ENCODE measurements at regions of chr1 and their contacts with region 1.

Region 1: GRCh38 chr1:181117638-181118449 is 29.3 kb downstream of the IER5 start:
- DNase-seq: no peak
- H3K4me3 Mint-ChIP-seq: no peak overlapping the region
- H3K27ac Mint-ChIP-seq: no peak overlapping the region
- H3K4me1 Mint-ChIP-seq: peaks cover 4% of the 10 kb centered on the region
- H3K27me3 Mint-ChIP-seq: peaks cover 2% of the 10 kb centered on the region

Region 2: GRCh38 chr1:181021811-181022434 is 95.9 kb before region 1 on chr1:
- CTCF ChIA-PET with region 1: no interaction called
- POLR2A ChIA-PET with region 1: no interaction called
- DNase-seq: peak; percentile 53
- H3K4me3 Mint-ChIP-seq: peak overlapping the region; percentile 93
- H3K27ac Mint-ChIP-seq: peak overlapping the region; percentile 93
- H3K4me1 Mint-ChIP-seq: peaks cover 49% of the 10 kb centered on the region
- H3K27me3 Mint-ChIP-seq: peaks cover 19% of the 10 kb centered on the region

Region 3: GRCh38 chr1:181128592-181129497 is 11.0 kb after region 1 on chr1:
- CTCF ChIA-PET with region 1: interaction called, 11 read pairs
- POLR2A ChIA-PET with region 1: interaction called, 3 read pairs
- DNase-seq: no peak
- H3K4me3 Mint-ChIP-seq: no peak overlapping the region
- H3K27ac Mint-ChIP-seq: peak overlapping the region; percentile 15
- H3K4me1 Mint-ChIP-seq: peaks cover 40% of the 10 kb centered on the region
- H3K27me3 Mint-ChIP-seq: peaks cover 3% of the 10 kb centered on the region

Region 4: DNA sequence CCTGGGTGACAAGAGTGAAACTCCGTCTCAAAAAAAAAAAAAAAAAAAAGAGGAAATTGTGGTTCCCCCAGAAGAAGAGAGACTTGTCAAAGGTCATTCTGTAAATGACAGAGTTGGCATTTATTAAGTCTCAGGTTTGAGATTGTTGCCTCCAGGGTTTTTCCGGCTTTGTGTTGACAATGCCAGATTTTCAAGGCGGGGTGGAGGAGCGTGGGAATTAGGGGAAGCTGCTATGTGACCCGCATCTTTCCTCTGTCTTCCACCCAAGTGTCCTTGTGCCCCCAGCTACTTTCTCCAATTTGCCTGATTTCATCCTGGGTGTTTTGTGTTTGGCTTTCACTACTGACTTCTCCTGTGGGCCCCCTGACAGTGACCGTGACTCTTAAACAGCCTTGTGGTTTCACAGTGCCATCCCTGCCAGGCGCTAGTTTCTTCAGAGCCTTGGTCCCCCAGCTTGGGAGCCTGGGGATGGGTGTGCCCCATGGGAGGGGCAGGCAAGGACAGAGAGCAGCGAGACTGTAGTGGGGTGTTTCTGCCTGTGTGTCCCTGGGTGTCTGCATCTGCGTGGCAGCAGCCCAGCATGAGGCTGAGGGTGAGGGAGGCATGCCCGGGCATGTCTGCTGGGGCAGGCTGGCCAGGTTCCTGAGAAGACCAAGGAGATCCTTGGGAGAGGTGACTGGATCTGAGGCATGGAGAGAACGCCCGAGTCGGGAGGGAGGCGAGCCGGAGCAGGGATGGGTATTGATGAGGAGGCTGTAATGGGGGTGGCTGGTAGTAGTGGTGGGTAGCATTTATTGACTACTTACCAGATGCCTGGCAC is 16.9 kb after region 1 on chr1:
- CTCF ChIA-PET with region 1: interaction called, 11 read pairs
- POLR2A ChIA-PET with region 1: no interaction called
- DNase-seq: peak; percentile 26
- H3K4me3 Mint-ChIP-seq: peak overlapping the region; percentile 44
- H3K27ac Mint-ChIP-seq: peak overlapping the region; percentile 90
- H3K4me1 Mint-ChIP-seq: peaks cover 70% of the 10 kb centered on the region
- H3K27me3 Mint-ChIP-seq: no peaks in the 10 kb centered on the region